ENCODE measurements at regions of chr10 and their contacts with region 1.

Region 1: DNA sequence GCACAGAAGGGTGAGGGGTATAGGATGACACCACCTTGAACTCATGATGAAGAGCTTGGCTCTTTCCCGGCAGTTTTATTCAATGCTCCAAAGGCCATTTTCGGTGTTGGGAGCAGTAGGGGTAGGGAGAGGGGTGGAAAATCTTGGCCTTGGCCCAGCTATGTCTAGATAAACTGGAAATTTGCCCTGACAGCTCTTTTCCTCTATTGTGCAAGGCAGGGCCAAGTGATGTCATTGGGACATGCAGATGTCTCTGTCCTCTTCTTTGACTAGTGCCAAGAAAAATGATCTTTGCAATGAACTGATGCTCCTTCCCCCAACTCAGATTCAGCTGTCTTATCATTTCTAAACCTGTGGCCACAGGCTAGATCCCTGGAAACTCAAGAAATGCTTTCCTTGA is 27.7 kb upstream of the PRKCQ start:
- DNase-seq: no peak
- H3K4me3 Mint-ChIP-seq: peak overlapping the region; percentile 65
- H3K27ac Mint-ChIP-seq: peak overlapping the region; percentile 94
- H3K4me1 Mint-ChIP-seq: peaks cover 72% of the 10 kb centered on the region
- H3K27me3 Mint-ChIP-seq: no peaks in the 10 kb centered on the region

Region 2: DNA sequence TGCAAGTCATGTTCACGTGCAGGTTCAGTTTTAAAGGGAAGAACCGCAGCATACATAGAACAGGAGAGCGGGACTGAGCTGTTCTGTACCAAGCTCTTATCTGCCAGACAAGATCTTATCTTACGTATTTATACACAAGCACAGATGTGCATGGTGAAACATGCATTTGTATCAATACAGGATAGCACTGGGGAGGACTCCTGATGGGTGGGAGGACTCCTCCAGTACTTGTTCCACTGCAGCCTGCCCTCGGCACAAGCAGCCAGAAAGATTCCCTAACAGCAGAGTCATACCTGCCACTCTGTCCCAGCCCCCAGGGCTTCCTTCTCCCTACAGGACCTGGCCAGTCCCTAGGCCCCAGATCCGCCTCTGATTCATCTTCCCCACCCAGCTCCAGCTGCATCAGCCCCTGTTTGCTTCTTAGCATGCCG is 14.5 kb before region 1 on chr10:
- CTCF ChIA-PET with region 1: interaction called, 5 read pairs
- intact Hi-C with region 1: loop called (anchors 1 kb)
- DNase-seq: peak; percentile 54
- H3K4me3 Mint-ChIP-seq: peak overlapping the region; percentile 55
- H3K27ac Mint-ChIP-seq: peak overlapping the region; percentile 96
- H3K4me1 Mint-ChIP-seq: peaks cover 89% of the 10 kb centered on the region
- H3K27me3 Mint-ChIP-seq: no peaks in the 10 kb centered on the region

Region 3: GRCh38 chr10:6621536-6621935 is 13.8 kb after region 1 on chr10:
- CTCF ChIA-PET with region 1: no interaction called
- intact Hi-C with region 1: no loop called
- DNase-seq: no peak
- H3K4me3 Mint-ChIP-seq: no peak overlapping the region
- H3K27ac Mint-ChIP-seq: no peak overlapping the region
- H3K4me1 Mint-ChIP-seq: peaks cover 51% of the 10 kb centered on the region
- H3K27me3 Mint-ChIP-seq: no peaks in the 10 kb centered on the region

Measured in activated naive CD4-positive, alpha-beta T cell treated with anti-CD3 and anti-CD28 coated beads for 36 hours (primary cell).